IMR-90 (cell line): ENCODE measurements at regions of chr22 and their contacts with region 1.

Region 1: DNA sequence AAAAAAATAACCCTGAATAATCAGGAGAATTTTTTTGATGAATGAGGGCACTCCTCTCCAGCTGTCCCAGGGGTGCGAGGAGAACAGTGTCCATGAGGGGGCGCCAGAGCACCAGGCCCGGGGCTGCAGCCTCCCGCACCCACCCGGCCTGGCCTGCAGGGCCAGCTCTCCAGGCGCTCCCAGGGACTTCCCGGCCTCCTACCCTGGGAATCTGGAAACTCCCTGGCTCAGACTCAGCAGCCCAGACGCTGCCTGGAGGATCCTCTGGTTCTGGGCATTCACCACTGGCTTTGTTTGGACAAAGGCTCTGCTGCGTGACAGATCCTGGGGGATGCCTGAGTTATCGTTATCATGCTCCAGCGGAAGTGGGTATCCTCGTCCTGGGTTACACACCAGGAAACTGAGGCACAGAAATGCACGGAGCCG is 31.0 kb downstream of the MCM5 start:
- DNase-seq: peak; percentile 96
- ATAC-seq: peak; percentile 97
- H3K4me3 ChIP-seq: no peak overlapping the region
- H3K27ac ChIP-seq: peak overlapping the region; percentile 2; the same call in 1 of the 2 replicates
- H3K4me1 ChIP-seq: peaks cover 13% of the 10 kb centered on the region
- H3K27me3 ChIP-seq: no peaks in the 10 kb centered on the region
- CTCF ChIP-seq: peak; percentile 99
- POLR2A ChIP-seq: peak; percentile 74
- RAD21 ChIP-seq: peak; percentile 100

Region 2: GRCh38 chr22:35350539-35351503 is 80.1 kb before region 1 on chr22:
- CTCF ChIA-PET with region 1: interaction called, 4 read pairs
- POLR2A ChIA-PET with region 1: no interaction called
- dilution Hi-C with region 1: no loop called
- in situ Hi-C with region 1: no loop called
- intact Hi-C with region 1: loop called (anchors 2 kb)
- DNase-seq: peak; percentile 89
- ATAC-seq: peak; percentile 94
- H3K4me3 ChIP-seq: peak overlapping the region; percentile 43
- H3K27ac ChIP-seq: peak overlapping the region; percentile 38
- H3K4me1 ChIP-seq: peaks cover 12% of the 10 kb centered on the region
- H3K27me3 ChIP-seq: no peaks in the 10 kb centered on the region
- CTCF ChIP-seq: peak; percentile 95
- POLR2A ChIP-seq: peak; percentile 60; the same call in 1 of the 2 replicates
- RAD21 ChIP-seq: peak; percentile 95

Region 3: GRCh38 chr22:35489239-35489638 is 58.3 kb after region 1 on chr22:
- CTCF ChIA-PET with region 1: no interaction called
- POLR2A ChIA-PET with region 1: no interaction called
- dilution Hi-C with region 1: no loop called
- in situ Hi-C with region 1: no loop called
- intact Hi-C with region 1: no loop called
- DNase-seq: no peak
- ATAC-seq: no peak
- H3K4me3 ChIP-seq: no peak overlapping the region
- H3K27ac ChIP-seq: no peak overlapping the region
- H3K4me1 ChIP-seq: peaks cover 2% of the 10 kb centered on the region; the same call in 1 of the 2 replicates
- H3K27me3 ChIP-seq: peaks cover 21% of the 10 kb centered on the region
- CTCF ChIP-seq: no peak
- POLR2A ChIP-seq: no peak
- RAD21 ChIP-seq: no peak

Region 4: DNA sequence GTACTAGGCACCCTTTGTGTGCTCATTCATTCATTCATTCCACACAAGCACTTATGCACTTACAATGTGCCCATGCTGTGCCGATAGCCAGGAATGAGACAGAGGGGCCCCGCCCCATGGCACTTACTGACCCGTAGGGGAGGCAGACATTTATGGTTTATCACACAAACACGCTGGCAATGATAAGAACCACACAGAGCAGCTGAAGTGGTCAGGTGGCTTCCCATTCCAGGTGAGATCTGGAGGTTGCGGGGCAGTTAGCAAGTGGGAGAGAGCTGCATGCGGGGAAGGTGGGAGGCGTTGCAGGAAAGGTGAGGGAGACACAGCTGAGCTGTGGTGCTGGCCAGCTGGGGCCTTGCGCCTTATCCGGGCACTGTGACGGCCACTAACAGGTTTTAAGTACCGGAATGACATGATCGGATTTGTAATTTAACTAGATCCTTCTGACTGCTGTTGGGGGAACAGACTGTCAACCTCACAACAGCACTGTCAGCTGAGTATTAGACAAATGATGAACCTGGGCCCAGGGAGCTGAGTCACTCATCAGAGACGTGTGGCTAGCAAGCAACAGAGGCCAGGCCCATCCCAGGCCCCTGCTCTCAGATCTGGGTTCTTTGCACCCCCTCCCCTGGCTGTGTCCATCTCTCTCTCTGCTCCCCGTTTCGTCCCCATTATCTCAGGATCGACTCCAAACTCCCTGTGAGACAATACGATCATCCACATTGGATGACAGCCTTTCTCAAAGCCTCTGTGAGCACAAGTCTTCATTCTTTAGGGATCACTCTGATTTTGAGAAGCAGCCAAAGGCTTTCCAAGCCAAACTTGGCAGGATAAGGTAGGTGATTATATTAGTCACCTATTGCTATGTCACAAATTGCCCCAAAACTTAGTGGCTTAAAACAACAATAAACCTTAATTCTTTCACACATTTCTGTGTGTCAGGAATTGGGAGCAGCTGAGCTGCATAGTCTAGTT is 138.1 kb after region 1 on chr22:
- CTCF ChIA-PET with region 1: interaction called, 4 read pairs
- POLR2A ChIA-PET with region 1: no interaction called
- dilution Hi-C with region 1: no loop called
- in situ Hi-C with region 1: no loop called
- intact Hi-C with region 1: loop called (anchors 5 kb)
- DNase-seq: peak; percentile 79
- ATAC-seq: peak; percentile 65
- H3K4me3 ChIP-seq: no peak overlapping the region
- H3K27ac ChIP-seq: peak overlapping the region; percentile 21; the same call in 1 of the 2 replicates
- H3K4me1 ChIP-seq: peaks cover 25% of the 10 kb centered on the region
- H3K27me3 ChIP-seq: peaks cover 2% of the 10 kb centered on the region; the same call in 1 of the 2 replicates
- CTCF ChIP-seq: no peak
- POLR2A ChIP-seq: no peak
- RAD21 ChIP-seq: no peak

Region 5: GRCh38 chr22:35627264-35628041 is 196.5 kb after region 1 on chr22:
- CTCF ChIA-PET with region 1: no interaction called
- POLR2A ChIA-PET with region 1: no interaction called
- dilution Hi-C with region 1: no loop called
- in situ Hi-C with region 1: no loop called
- intact Hi-C with region 1: loop called (anchors 1 kb)
- DNase-seq: peak; percentile 90
- ATAC-seq: peak; percentile 77
- H3K4me3 ChIP-seq: peak overlapping the region; percentile 50
- H3K27ac ChIP-seq: peak overlapping the region; percentile 82
- H3K4me1 ChIP-seq: peaks cover 9% of the 10 kb centered on the region
- H3K27me3 ChIP-seq: no peaks in the 10 kb centered on the region
- CTCF ChIP-seq: peak; percentile 81
- POLR2A ChIP-seq: no peak
- RAD21 ChIP-seq: peak; percentile 88

Region 6: DNA sequence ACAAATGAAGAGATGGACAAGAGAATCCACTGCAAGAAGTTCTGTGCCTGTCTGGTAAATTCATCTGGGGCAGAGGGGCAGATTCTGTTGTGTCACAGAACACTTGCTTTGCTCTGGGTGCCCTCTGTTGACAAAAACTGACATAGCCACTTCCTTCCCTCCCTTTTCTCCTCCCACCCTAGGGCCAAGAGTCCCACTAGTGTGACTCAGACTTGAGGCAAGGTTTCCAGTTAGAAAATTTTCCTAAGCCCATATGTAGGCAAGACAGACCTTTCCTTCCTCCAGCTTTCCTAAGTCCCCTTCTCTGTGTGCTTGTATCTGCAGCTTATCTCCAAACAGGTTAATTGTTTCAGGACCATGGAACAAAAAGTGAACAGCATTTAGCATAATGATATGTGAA is 490.9 kb after region 1 on chr22:
- CTCF ChIA-PET with region 1: no interaction called
- POLR2A ChIA-PET with region 1: no interaction called
- dilution Hi-C with region 1: no loop called
- in situ Hi-C with region 1: no loop called
- intact Hi-C with region 1: loop called (anchors 10 kb)
- DNase-seq: peak; percentile 90
- ATAC-seq: peak; percentile 94
- H3K4me3 ChIP-seq: no peak overlapping the region
- H3K27ac ChIP-seq: no peak overlapping the region
- H3K4me1 ChIP-seq: peaks cover 6% of the 10 kb centered on the region
- H3K27me3 ChIP-seq: no peaks in the 10 kb centered on the region
- CTCF ChIP-seq: peak; percentile 80
- POLR2A ChIP-seq: no peak
- RAD21 ChIP-seq: peak; percentile 93